AG04449 (cell line): ENCODE measurements at regions of chr22 and their contacts with region 1.

Region 1: GRCh38 chr22:24156913-24157821 is 24.1 kb upstream of the SUSD2 start:
- DNase-seq: no peak
- H3K4me3 ChIP-seq: peak overlapping the region; percentile 83
- CTCF ChIP-seq: peak; percentile 97

Region 2: GRCh38 chr22:24009227-24010017 is 147.7 kb before region 1 on chr22:
- CTCF ChIA-PET with region 1: interaction called, 11 read pairs
- POLR2A ChIA-PET with region 1: no interaction called
- DNase-seq: no peak
- H3K4me3 ChIP-seq: no peak overlapping the region
- CTCF ChIP-seq: no peak

Region 3: DNA sequence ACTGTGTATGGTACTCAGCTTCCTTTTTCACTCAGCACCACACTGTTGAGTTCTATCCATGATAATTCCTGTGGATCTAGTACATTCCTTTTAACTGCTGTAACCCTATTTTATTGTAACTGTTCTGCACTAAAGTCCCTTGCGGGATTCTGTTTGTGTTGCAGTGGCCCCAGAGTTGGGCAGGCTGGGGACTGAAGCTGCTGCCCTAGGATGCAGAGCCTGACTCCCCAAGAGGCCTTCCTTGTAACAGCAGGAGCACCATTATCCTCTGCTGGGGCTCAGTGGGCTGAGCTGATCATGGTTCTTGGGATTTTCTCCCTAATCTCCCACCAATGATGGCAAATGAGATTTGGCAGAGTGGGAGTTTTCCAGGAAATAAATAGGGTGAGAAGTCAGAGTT is 68.4 kb before region 1 on chr22:
- CTCF ChIA-PET with region 1: interaction called, 27 read pairs
- POLR2A ChIA-PET with region 1: interaction called, 3 read pairs
- DNase-seq: no peak
- H3K4me3 ChIP-seq: no peak overlapping the region
- CTCF ChIP-seq: no peak

Region 4: GRCh38 chr22:24133187-24133965 is 23.8 kb before region 1 on chr22:
- CTCF ChIA-PET with region 1: interaction called, 71 read pairs
- POLR2A ChIA-PET with region 1: no interaction called
- DNase-seq: no peak
- H3K4me3 ChIP-seq: no peak overlapping the region
- CTCF ChIP-seq: peak; percentile 39

Region 5: GRCh38 chr22:24146194-24146616 is 11.0 kb before region 1 on chr22:
- CTCF ChIA-PET with region 1: interaction called, 71 read pairs
- POLR2A ChIA-PET with region 1: interaction called, 4 read pairs
- DNase-seq: peak; percentile 75
- H3K4me3 ChIP-seq: no peak overlapping the region; the same call in 1 of the 2 replicates
- CTCF ChIP-seq: no peak

Region 6: DNA sequence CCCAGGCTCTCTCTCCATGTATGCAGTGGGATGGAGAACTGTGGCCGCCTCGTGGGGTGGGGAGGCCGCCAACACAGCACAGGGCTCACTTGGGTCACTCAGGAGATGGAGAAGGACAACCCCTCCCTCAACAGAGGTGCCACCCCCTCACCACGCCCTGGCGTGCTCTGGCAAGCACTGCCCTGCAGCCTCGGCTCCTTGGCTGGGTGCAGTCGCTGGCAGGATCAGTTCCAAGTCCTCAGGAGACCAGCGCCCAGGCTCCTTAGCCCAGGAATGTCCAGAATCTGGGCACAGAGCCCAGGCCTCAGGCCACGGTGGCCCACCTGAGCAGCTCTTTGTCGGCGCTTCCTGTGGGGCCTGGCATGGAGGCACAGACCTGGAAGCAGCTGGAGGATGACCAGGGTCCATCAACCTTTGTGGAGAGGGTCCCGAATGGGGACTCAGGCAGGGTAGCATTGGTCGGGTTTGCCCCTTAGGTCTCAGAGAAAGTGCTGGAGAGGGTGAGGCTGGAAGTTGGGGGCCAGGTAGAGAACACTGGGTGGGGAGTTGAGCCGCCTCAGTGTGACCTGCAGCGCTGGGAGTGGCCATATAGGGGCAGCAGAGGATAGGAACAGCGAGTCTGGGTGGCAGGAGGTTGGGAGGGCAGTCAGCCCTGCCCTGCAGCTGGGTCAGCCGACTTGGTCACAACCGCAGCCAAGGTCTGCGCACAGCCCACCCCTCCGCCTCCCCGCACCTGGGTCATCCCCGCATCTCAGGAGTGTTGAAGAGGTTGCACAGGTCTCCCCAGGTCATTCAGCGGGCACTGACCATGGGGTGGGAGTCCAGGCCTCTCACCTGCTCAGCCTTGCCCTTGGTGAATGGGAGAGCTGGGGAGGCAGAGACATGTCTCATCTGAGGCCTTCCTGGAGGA is 32.3 kb after region 1 on chr22:
- CTCF ChIA-PET with region 1: interaction called, 11 read pairs
- POLR2A ChIA-PET with region 1: no interaction called
- DNase-seq: no peak
- H3K4me3 ChIP-seq: no peak overlapping the region
- CTCF ChIP-seq: peak; percentile 97

Region 7: DNA sequence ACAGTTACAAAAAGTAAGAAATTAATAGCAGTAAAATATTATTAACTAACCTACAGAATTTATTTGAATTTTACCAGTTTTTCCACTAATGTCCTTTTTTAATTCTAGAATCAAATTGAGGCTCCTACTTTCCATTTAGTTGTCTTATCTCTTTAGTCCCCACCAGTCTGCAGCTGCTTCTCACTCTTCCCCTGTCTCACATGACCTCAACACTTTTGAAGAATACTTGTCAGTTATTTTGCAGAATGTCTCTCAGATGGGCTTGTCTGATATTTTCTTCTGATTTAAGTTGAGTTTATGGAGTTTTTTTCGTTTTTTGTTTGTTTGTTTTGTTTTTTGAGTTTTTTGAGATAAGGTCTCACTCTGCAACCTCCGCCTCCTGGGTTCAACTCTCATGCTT is 196.0 kb after region 1 on chr22:
- CTCF ChIA-PET with region 1: no interaction called
- POLR2A ChIA-PET with region 1: no interaction called
- DNase-seq: no peak
- H3K4me3 ChIP-seq: no peak overlapping the region
- CTCF ChIP-seq: no peak